ENCODE measurements at regions of chr7 and their contacts with region 1.

Region 1: GRCh38 chr7:80018941-80019752 is 115.5 kb upstream of the GNAI1 start:
- DNase-seq: peak; percentile 21
- H3K4me3 Mint-ChIP-seq: no peak overlapping the region
- H3K27ac Mint-ChIP-seq: no peak overlapping the region
- H3K4me1 Mint-ChIP-seq: no peaks in the 10 kb centered on the region
- H3K27me3 Mint-ChIP-seq: no peaks in the 10 kb centered on the region

Region 2: GRCh38 chr7:79298145-79298760 is 720.9 kb before region 1 on chr7:
- CTCF ChIA-PET with region 1: no interaction called
- POLR2A ChIA-PET with region 1: no interaction called
- intact Hi-C with region 1: loop called (anchors 10 kb)
- DNase-seq: no peak
- H3K4me3 Mint-ChIP-seq: no peak overlapping the region
- H3K27ac Mint-ChIP-seq: no peak overlapping the region
- H3K4me1 Mint-ChIP-seq: no peaks in the 10 kb centered on the region
- H3K27me3 Mint-ChIP-seq: no peaks in the 10 kb centered on the region

Region 3: GRCh38 chr7:79434098-79434497 is 585.0 kb before region 1 on chr7:
- CTCF ChIA-PET with region 1: no interaction called
- POLR2A ChIA-PET with region 1: no interaction called
- intact Hi-C with region 1: no loop called
- DNase-seq: no peak
- H3K4me3 Mint-ChIP-seq: no peak overlapping the region
- H3K27ac Mint-ChIP-seq: no peak overlapping the region
- H3K4me1 Mint-ChIP-seq: no peaks in the 10 kb centered on the region
- H3K27me3 Mint-ChIP-seq: no peaks in the 10 kb centered on the region

Region 4: GRCh38 chr7:79734158-79734557 is 285.0 kb before region 1 on chr7:
- CTCF ChIA-PET with region 1: no interaction called
- POLR2A ChIA-PET with region 1: no interaction called
- intact Hi-C with region 1: no loop called
- DNase-seq: no peak
- H3K4me3 Mint-ChIP-seq: no peak overlapping the region
- H3K27ac Mint-ChIP-seq: no peak overlapping the region
- H3K4me1 Mint-ChIP-seq: no peaks in the 10 kb centered on the region
- H3K27me3 Mint-ChIP-seq: no peaks in the 10 kb centered on the region

Region 5: GRCh38 chr7:79949778-79950177 is 69.4 kb before region 1 on chr7:
- CTCF ChIA-PET with region 1: no interaction called
- POLR2A ChIA-PET with region 1: no interaction called
- intact Hi-C with region 1: loop called (anchors 10 kb)
- DNase-seq: no peak
- H3K4me3 Mint-ChIP-seq: no peak overlapping the region
- H3K27ac Mint-ChIP-seq: no peak overlapping the region
- H3K4me1 Mint-ChIP-seq: no peaks in the 10 kb centered on the region
- H3K27me3 Mint-ChIP-seq: no peaks in the 10 kb centered on the region

Region 6: DNA sequence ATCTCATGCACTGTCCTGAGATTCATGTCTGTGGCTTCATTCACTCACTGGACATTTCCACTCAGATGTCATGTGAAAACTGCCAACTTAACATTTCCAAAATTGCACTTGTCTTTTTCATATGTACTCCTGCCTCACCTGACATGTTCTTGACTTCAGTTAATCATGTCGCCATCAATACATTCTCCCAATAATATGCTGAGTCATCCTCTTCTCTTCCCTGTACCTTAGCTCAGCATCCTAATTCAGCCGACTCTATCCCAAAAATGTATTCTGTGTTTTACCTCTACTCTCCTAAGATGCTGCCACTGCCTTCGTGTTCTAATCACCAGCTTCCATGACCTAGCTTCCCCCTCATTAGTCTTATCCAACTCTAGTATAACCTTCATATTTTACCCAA is 21.6 kb after region 1 on chr7:
- CTCF ChIA-PET with region 1: no interaction called
- POLR2A ChIA-PET with region 1: no interaction called
- intact Hi-C with region 1: no loop called
- DNase-seq: no peak
- H3K4me3 Mint-ChIP-seq: no peak overlapping the region
- H3K27ac Mint-ChIP-seq: no peak overlapping the region
- H3K4me1 Mint-ChIP-seq: no peaks in the 10 kb centered on the region
- H3K27me3 Mint-ChIP-seq: no peaks in the 10 kb centered on the region